ENCODE measurements at regions of chr10 and their contacts with region 1.

Region 1: DNA sequence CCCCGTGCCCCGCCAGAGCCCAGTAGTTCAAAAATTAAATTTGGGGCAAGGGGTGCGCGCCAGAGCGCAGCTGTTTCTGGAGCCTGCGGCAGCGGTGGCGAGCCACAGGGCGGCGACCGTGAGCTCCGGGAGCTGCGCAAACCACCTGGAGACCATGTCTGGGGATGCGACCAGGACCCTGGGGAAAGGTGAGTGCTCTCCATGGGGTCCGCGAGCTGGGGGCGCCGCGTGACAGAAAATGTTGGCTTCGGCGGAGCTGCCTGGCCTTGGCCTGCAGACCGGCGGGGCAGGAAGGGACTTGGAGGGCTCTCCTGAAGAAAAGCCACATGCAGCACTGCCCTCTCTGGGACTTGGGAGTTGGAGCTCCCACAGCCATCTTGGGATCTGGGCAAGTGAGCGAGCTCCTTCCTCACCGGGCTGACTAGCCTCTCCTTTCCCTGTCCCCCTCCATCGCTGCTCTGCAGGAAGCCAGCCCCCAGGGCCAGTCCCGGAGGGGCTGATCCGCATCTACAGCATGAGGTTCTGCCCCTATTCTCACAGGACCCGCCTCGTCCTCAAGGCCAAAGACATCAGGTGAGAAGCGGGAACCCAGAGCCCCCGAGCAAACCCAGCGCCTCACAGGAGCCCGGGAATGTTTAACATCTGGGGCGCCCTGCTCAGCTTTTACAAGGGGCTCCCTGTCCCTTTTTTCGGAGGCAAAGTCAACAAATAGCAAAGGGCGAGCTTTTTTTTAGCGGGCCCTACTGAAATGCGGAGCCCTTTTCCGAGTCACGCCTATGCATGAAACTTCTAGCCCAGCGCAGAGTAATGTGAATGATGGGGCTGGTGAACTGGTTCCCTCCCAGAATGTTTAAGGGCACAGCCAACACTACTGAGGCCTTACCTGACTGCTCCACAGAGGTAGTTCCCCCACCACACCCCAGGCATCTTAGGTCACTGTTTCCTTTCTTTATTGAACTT is 6.1 kb downstream of the GSTO2 start:
- DNase-seq: peak; percentile 75
- ATAC-seq: peak; percentile 93
- H3K4me3 Mint-ChIP-seq: peak overlapping the region; percentile 30
- H3K27ac Mint-ChIP-seq: no peak overlapping the region
- H3K4me1 Mint-ChIP-seq: no peaks in the 10 kb centered on the region
- H3K27me3 Mint-ChIP-seq: peaks cover 8% of the 10 kb centered on the region

Region 2: DNA sequence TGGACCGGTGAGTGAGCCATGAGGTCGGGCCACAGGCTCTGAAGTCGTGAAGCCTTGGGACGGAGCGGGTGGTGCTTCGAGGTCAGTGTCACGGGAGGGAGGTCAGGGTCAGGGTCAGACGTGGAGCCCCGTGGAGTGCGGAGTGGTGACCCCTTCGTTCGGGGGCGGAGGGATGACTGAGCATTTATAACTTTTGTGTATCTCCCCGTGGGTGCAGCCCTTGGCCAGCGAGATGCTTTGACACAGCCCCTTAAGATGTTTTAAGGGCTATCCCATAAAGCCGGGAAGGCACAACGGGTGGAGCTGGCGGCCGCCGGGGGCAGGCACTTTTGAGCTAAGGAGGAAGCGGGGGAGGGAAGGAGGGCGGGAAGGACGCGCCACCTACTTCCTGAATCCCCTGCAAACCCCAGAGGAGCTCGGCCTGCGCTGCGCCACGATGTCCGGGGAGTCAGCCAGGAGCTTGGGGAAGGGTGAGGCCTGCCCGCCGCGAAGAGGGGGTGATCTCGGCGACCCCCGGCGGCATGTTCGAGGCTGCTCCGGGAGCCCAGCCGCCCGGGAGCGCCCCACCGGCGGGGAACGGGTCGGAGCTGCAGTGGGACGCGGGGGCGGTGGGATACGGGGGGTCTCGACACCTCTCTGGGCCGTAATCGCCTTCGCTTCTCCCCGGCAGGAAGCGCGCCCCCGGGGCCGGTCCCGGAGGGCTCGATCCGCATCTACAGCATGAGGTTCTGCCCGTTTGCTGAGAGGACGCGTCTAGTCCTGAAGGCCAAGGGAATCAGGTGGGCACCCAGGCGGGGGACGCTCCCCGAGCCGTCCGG is 20.3 kb before region 1 on chr10 and contains the start of gene GSTO1:
- CTCF ChIA-PET with region 1: interaction called, 20 read pairs
- POLR2A ChIA-PET with region 1: interaction called, 5 read pairs
- intact Hi-C with region 1: no loop called
- DNase-seq: peak; percentile 71
- ATAC-seq: peak; percentile 56
- H3K4me3 Mint-ChIP-seq: peak within 1 kb of the TSS; percentile 85
- H3K27ac Mint-ChIP-seq: peak within 1 kb of the TSS; percentile 97
- H3K4me1 Mint-ChIP-seq: peaks cover 53% of the 10 kb centered on the region
- H3K27me3 Mint-ChIP-seq: peaks cover 2% of the 10 kb centered on the region
- total RNA-seq, gene GSTO1: 261 to 320 TPM

Region 3: DNA sequence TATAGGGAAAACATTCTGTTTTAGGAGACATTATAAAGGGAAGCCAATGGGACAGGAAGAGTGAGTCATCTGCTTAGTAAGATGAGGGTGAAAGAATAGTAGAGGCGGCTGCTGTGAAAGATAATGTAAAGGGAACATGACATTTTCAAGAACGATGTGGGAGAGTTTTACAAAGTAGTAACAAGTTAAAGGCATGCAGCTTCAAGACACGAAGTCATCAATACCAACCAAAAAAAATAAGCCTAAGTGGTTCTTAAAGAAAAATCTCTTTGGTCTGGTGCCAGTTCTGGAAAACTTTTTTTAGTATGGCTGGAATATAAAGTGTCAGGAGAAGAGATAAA is 14.3 kb before region 1 on chr10:
- CTCF ChIA-PET with region 1: interaction called, 20 read pairs
- POLR2A ChIA-PET with region 1: no interaction called
- intact Hi-C with region 1: no loop called
- DNase-seq: no peak
- ATAC-seq: peak; percentile 77
- H3K4me3 Mint-ChIP-seq: peak overlapping the region; percentile 59
- H3K27ac Mint-ChIP-seq: peak overlapping the region; percentile 89
- H3K4me1 Mint-ChIP-seq: peaks cover 84% of the 10 kb centered on the region
- H3K27me3 Mint-ChIP-seq: no peaks in the 10 kb centered on the region

Region 4: DNA sequence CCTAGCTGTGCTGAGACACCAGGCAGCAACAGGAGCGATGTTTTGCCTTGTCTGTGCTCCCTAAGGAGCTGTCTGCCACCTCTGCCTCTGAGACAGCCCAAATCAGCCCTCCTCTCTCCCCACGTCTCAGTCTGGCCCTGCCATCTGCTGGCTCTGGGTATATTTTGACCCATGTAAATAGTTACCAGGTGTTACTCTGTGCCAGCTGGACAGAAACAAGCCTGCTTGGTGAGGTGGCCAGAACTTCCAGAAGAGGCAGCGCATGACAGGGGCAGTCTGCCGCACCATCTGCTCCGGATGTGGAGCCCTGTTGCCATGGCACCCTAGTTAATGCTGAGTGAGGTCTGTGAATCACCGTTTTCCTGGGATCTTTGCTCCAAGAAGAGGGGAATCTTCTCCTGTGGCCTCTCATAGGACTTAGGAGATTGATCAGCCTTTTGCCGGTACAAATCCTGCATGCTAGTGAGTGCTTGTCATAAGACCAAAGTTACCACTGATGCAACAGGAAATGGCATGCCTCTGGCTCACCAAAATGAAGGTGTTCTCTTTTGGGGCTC is 25.8 kb after region 1 on chr10:
- CTCF ChIA-PET with region 1: interaction called, 46 read pairs
- POLR2A ChIA-PET with region 1: no interaction called
- intact Hi-C with region 1: no loop called
- DNase-seq: peak; percentile 54
- ATAC-seq: peak; percentile 66
- H3K4me3 Mint-ChIP-seq: peak overlapping the region; percentile 41
- H3K27ac Mint-ChIP-seq: peak overlapping the region; percentile 91
- H3K4me1 Mint-ChIP-seq: peaks cover 43% of the 10 kb centered on the region
- H3K27me3 Mint-ChIP-seq: no peaks in the 10 kb centered on the region

Region 5: GRCh38 chr10:104308439-104308903 is 33.4 kb after region 1 on chr10:
- CTCF ChIA-PET with region 1: interaction called, 46 read pairs
- POLR2A ChIA-PET with region 1: no interaction called
- intact Hi-C with region 1: no loop called
- DNase-seq: peak; percentile 61
- ATAC-seq: peak; percentile 80
- H3K4me3 Mint-ChIP-seq: no peak overlapping the region
- H3K27ac Mint-ChIP-seq: peak overlapping the region; percentile 76
- H3K4me1 Mint-ChIP-seq: peaks cover 62% of the 10 kb centered on the region
- H3K27me3 Mint-ChIP-seq: no peaks in the 10 kb centered on the region

Region 6: DNA sequence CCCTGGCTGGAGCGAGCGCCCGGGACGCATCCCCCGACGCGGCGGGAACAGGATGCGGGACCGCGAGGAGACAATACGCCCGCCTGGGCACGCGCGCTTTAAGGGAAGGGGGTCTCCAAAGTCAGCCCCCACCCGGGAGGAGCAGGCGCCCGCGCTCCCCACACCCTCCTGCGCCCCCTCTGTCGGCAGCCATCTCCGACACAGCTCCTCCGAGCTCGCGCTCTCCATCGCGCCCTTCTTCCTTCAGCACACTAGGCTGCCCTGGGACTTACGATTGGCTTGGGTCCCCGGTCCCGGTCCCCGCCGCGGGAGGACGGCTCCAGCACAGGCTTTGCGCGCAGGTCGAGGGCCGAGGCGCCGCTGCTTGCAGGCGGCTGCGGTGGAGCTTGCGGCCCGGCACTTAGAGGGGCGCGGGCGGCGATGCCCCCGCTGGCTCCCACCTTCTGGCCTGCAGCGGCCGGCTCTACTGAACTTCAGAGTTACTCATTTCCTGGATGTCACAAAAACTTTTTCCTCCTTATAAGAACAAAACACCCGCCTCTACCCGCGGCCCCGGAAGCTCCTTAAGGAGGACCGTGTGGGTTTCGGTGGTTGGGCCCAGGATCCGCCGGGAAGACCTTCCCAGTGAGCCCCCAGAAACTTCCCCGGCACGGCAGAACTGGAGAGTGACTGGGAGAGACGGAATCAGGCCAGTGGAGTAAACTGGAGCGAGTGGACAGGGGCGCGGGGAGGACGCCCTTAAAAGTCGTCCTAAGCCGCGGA is 63.1 kb after region 1 on chr10 and contains the start of gene ITPRIP:
- CTCF ChIA-PET with region 1: interaction called, 16 read pairs
- POLR2A ChIA-PET with region 1: no interaction called
- intact Hi-C with region 1: no loop called
- DNase-seq: peak; percentile 82
- ATAC-seq: peak; percentile 78
- H3K4me3 Mint-ChIP-seq: peak within 1 kb of the TSS; percentile 93
- H3K27ac Mint-ChIP-seq: peak within 1 kb of the TSS; percentile 99
- H3K4me1 Mint-ChIP-seq: peaks cover 45% of the 10 kb centered on the region
- H3K27me3 Mint-ChIP-seq: no peaks in the 10 kb centered on the region
- total RNA-seq, gene ITPRIP: 20.3 to 21.6 TPM

Measured in activated CD4-positive, alpha-beta T cell treated with anti-CD3 and anti-CD28 coated beads for 36 hours (primary cell).